GM10248 (cell line): ENCODE measurements at regions of chr14 and their contacts with region 1.

Region 1: GRCh38 chr14:74641601-74642391 is 29.8 kb upstream of the LTBP2 start:
- DNase-seq: no peak
- CTCF ChIP-seq: no peak

Region 2: DNA sequence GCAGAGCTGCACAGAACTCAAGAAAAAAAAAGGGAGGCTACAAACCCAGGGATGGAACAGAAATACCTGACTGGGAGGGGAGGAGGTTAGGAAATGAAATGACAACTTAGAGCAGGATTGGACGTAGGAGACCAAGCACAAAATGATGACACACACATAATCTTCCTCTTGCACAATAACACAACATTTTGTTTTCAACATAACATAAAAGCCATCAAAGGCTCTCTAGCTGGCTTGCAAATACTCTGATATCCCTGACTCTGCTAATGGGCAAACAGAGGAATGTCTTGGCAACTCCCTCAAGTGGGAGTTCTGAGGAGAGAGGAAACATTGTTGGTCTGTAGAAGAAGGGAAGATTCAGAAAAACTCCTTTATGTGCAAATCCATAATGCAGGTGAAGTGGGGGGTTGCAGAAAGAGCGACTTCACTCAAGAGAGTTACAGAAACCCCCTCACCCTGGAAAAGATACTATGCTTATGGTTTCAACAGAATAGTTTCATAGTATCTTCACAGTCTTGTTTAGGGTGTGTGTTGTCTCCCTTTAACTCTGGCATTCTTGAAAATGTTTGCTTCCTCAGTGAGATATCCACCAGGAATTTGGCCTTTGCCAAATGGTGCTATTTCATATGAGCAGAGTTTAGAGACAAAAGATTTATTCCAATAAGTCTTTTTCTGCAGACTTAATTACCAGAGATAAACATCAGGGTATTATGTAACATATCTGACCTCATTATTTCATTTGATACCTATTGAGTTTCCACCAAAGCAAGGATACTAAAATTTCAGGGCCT is 14.0 kb after region 1 on chr14:
- CTCF ChIA-PET with region 1: interaction called, 21 read pairs
- POLR2A ChIA-PET with region 1: no interaction called
- DNase-seq: no peak
- CTCF ChIP-seq: no peak

Region 3: DNA sequence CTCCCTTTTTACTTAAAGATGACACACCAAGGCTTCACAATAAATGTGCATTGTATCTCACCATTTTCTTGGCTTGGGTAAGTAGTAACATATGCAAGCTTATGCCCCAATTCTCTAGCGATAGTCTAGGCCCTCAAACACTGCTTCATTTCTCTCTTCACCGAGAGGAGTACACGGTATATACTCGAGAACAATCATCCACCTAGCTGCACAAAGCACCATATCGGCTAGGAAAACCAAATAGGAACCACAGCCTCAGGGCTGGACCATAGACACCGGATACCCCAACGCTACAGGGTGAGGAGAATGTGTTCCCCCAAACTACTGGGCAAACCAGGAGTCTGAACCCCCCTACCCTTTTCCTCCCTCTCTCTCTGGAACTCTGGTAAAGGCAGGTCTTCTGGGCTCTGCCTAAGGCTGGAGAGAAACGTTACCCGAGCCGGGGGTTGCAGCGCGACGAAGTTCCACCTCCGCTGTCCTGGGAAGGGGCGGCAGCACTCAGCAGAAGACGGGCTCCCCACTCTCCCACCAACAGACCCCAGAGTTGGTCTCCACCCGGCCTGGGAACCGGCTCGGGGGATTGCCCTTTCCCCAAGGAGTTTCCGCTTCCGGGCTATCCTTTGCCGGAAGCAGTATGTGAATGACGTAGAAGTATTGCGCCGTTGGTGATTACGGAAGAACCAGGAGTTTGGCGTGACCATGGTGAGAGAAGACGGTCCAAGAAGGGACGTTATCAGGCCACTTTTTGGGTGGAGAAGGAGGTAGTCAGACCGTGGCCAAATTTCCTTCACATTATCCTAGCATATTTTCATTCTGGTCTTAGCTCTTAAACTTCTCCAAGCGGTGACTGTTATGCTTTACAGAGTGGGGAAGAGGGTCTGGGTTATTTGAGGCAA is 71.0 kb after region 1 on chr14 and contains the starts of genes AREL1 and FCF1:
- CTCF ChIA-PET with region 1: no interaction called
- POLR2A ChIA-PET with region 1: no interaction called
- DNase-seq: peak; percentile 93
- CTCF ChIP-seq: no peak